ENCODE measurements at regions of chrX and their contacts with region 1.

Region 1: GRCh38 chrX:150365051-150365989 is 2.2 kb downstream of the MAMLD1 start:
- DNase-seq: peak; percentile 70
- H3K4me3 Mint-ChIP-seq: peak overlapping the region; percentile 83
- H3K27ac Mint-ChIP-seq: peak overlapping the region; percentile 87
- H3K4me1 Mint-ChIP-seq: peaks cover 30% of the 10 kb centered on the region
- H3K27me3 Mint-ChIP-seq: peaks cover 3% of the 10 kb centered on the region

Region 2: GRCh38 chrX:149392903-149393594 is 972.3 kb before region 1 on chrX:
- intact Hi-C with region 1: no loop called
- DNase-seq: no peak
- H3K4me3 Mint-ChIP-seq: no peak overlapping the region
- H3K27ac Mint-ChIP-seq: no peak overlapping the region
- H3K4me1 Mint-ChIP-seq: no peaks in the 10 kb centered on the region
- H3K27me3 Mint-ChIP-seq: no peaks in the 10 kb centered on the region

Region 3: GRCh38 chrX:149962859-149963757 is 402.2 kb before region 1 on chrX:
- intact Hi-C with region 1: loop called (anchors 2 kb)
- DNase-seq: no peak
- H3K4me3 Mint-ChIP-seq: no peak overlapping the region
- H3K27ac Mint-ChIP-seq: no peak overlapping the region
- H3K4me1 Mint-ChIP-seq: no peaks in the 10 kb centered on the region
- H3K27me3 Mint-ChIP-seq: no peaks in the 10 kb centered on the region

Region 4: GRCh38 chrX:150032741-150033140 is 332.6 kb before region 1 on chrX:
- intact Hi-C with region 1: no loop called
- DNase-seq: no peak
- H3K4me3 Mint-ChIP-seq: no peak overlapping the region
- H3K27ac Mint-ChIP-seq: no peak overlapping the region
- H3K4me1 Mint-ChIP-seq: peaks cover 11% of the 10 kb centered on the region
- H3K27me3 Mint-ChIP-seq: peaks cover 11% of the 10 kb centered on the region

Region 5: GRCh38 chrX:150316564-150316963 is 48.8 kb before region 1 on chrX:
- intact Hi-C with region 1: no loop called
- DNase-seq: no peak
- H3K4me3 Mint-ChIP-seq: no peak overlapping the region
- H3K27ac Mint-ChIP-seq: no peak overlapping the region
- H3K4me1 Mint-ChIP-seq: no peaks in the 10 kb centered on the region
- H3K27me3 Mint-ChIP-seq: no peaks in the 10 kb centered on the region

Region 6: DNA sequence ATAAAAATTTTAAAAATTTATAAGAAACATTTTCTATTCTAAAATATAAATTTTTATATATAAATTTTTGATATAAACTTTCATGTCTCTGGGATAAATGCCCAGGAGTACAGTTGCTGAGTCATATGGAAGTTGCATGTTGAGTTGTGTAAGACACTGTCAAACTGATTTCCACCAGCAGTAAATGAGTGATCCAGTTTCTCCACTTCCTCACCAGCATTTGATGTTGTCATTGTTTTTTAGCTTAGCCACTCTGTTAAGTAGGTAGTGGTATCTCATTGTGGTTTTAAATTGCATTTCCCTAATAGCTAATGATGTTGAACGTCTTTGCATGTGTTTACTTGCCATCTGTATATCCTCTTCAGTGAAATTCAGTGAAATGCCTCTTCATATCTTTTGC is 64.3 kb after region 1 on chrX:
- intact Hi-C with region 1: loop called (anchors 5 kb)
- DNase-seq: no peak
- H3K4me3 Mint-ChIP-seq: no peak overlapping the region
- H3K27ac Mint-ChIP-seq: no peak overlapping the region
- H3K4me1 Mint-ChIP-seq: peaks cover 10% of the 10 kb centered on the region
- H3K27me3 Mint-ChIP-seq: no peaks in the 10 kb centered on the region

Region 7: GRCh38 chrX:150486011-150486410 is 120.7 kb after region 1 on chrX:
- intact Hi-C with region 1: loop called (anchors 1 kb)
- DNase-seq: peak; percentile 36
- H3K4me3 Mint-ChIP-seq: no peak overlapping the region
- H3K27ac Mint-ChIP-seq: no peak overlapping the region
- H3K4me1 Mint-ChIP-seq: peaks cover 55% of the 10 kb centered on the region
- H3K27me3 Mint-ChIP-seq: no peaks in the 10 kb centered on the region

Region 8: DNA sequence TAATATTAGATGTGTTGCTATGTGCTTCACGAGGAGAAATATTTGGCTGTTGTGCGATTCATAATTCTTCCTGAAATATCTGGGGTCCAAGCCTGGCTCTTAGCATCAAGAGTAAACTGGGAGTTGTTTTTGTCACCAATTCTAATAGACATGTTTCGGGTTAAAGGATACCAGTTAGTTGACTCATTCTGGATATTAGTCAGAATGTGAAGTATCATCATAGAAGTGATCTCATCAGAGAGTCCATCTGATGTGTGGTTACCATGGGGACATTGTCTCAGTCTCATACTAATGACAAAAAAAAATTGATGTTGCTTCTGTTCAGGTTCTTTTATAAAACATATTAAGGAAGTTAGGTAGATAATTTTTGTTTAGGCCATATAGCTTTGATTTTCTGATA is 270.6 kb after region 1 on chrX:
- intact Hi-C with region 1: loop called (anchors 2 kb)
- DNase-seq: no peak
- H3K4me3 Mint-ChIP-seq: no peak overlapping the region
- H3K27ac Mint-ChIP-seq: peak overlapping the region; percentile 78
- H3K4me1 Mint-ChIP-seq: peaks cover 7% of the 10 kb centered on the region
- H3K27me3 Mint-ChIP-seq: no peaks in the 10 kb centered on the region